Heart right ventricle (tissue), 16 donors: ENCODE measurements at regions of chr22 and their contacts with region 1.

Region 1: DNA sequence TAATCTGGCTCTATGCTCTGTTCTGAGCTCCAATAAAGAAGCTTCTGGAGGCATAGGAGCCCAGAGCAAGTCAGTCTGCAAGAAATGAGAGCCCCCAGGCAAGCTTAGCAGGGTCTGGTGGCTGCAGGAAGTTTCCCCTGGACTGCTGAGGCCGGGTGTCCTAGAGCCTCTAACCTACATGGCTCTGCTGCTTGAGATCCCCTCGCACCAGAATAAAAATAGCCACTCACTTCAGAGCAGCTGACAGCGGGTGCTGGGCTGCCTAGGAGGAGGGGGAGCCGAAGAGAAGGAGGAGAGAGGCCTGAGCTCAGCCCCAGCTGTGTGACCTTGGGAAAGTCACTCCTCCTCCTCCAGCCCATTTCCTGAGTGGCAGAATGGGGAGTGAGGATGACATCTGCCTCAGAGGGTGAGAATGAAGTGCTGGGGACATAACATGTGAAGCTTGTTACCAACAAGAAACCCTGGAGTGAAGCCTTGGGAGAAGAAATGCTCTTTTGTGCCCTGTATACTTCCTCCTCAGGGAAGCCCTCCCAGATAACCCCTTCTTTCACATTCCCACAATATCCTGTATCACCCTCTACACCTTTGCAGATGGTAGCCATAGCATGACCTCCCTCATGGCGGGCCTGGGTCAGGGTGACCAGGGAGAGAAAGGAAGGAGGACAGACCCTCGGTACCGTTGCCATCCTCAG is 3.6 kb upstream of the INPP5J start:
- DNase-seq: peak; percentile 58
- ATAC-seq: peak; percentile 77 to 93 (median 86)
- H3K4me3 ChIP-seq: no peak overlapping the region
- H3K27ac ChIP-seq: peak overlapping the region; percentile 56 to 93 (median 86)
- H3K4me1 ChIP-seq: peaks cover 3 to 50% (median 31%) of the 10 kb centered on the region in 9 donors
- H3K27me3 ChIP-seq: no peaks in the 10 kb centered on the region
- CTCF ChIP-seq: no peak

Region 2: DNA sequence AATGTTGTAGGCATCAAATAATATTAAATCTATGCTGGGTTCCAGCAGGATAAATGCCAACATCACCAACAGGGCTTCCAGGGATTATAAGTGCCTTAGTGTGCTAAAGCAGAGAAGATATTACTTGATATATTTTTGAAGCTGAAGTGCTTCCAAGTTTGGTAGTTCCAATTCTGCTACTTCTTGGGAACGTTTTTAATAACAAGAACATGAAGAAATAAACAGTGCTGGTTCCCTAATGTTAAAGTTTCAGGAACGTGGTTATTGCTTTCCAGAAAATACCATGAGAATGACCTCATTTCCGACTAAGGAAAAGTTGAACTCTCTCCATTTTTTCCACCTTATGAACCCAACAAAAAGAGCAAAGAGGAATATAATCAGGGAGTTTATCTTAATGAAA is 36.2 kb after region 1 on chr22:
- intact Hi-C with region 1: loop called in 1 of 10 experiments (anchors 5 kb)
- DNase-seq: no peak
- ATAC-seq: peak in 1 of 8 donors; percentile 18
- H3K4me3 ChIP-seq: no peak overlapping the region
- H3K27ac ChIP-seq: peak overlapping the region in 8 of 10 donors; percentile 29 to 72 (median 49)
- H3K4me1 ChIP-seq: peaks cover 0 to 23% (median 10%) of the 10 kb centered on the region in 9 donors
- H3K27me3 ChIP-seq: no peaks in the 10 kb centered on the region
- CTCF ChIP-seq: no peak